Common myeloid progenitor, CD34-positive (primary cell): ENCODE measurements at regions of chr11 and their contacts with region 1.

Region 1: DNA sequence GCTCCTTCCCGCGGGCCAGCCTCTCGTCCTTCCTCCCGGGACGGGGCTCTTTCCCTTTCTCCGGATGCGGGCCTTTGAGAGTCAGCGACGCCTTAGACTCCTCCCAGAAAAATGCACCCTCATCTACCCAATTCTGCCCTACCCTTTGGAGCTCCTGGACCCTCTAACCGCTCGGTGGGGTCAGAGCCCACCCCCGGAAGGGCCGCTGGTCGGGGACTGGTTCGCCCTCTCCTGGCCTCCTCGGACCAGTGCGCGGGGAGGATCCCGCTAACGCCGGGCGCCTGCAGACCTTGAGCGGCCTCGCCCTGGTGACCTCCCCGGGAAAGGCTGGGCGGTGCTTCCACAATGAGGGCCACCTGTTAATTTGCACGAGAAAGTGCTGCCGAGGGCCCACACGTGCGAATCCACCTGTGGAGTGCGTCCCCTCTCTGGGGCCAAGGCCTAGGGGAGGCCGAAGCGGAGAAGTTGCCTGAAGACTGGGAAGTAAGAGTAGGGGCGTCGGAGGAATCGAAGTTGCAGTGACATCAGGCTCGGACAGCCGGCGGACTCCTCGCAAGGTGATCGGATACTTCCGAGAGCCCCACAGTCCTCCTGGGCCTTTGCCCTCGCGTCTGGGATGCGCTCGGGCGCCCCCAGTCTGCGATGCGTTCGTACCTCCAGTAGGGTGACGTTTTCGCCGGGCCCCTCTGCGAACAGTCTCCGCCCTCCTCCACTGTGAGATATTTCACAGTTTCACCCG is 61.5 kb downstream of the ENDOD1 start:
- DNase-seq: peak; percentile 95 to 97 (median 96)
- H3K4me3 ChIP-seq: peak overlapping the region; percentile 46 to 80 (median 64)
- H3K27ac ChIP-seq: peak overlapping the region; percentile 54 to 85
- H3K4me1 ChIP-seq: peaks cover 19 to 82% (median 62%) of the 10 kb centered on the region in 4 experiments
- H3K27me3 ChIP-seq: no peaks in the 10 kb centered on the region

Region 2: DNA sequence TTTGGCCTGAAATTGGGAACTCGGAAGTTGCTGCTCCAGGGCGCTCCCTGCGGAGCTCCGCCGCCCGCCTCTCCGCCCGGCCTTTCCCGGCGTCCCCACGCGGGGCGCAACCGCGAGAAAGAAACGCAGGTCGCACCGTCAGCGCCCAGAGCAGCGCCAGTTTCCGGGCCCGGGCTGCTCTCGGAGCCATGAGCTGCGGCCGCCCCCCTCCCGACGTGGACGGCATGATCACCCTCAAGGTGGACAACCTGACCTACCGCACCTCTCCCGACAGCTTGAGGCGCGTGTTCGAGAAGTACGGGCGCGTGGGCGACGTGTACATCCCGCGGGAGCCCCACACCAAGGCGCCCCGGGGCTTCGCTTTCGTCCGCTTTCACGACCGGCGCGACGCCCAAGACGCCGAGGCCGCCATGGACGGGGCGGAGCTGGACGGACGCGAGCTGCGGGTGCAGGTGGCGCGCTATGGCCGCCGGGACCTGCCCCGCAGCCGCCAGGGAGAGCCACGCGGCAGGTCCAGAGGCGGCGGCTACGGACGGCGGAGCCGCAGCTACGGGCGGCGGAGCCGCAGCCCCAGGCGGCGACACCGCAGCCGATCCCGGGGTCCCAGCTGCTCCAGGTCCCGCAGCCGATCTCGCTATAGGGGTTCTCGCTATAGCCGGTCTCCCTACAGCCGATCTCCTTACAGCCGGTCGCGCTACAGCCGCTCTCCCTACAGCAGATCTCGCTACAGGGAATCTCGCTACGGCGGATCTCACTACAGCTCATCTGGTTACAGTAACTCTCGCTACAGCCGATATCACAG is 83.9 kb before region 1 on chr11:
- CTCF ChIA-PET with region 1: interaction called, 275 read pairs
- POLR2A ChIA-PET with region 1: interaction called, 4 read pairs
- DNase-seq: peak; percentile 69 to 85 (median 77)
- H3K4me3 ChIP-seq: peak overlapping the region; percentile 80 to 97 (median 92)
- H3K27ac ChIP-seq: peak overlapping the region; percentile 77 to 93
- H3K4me1 ChIP-seq: peaks cover 4 to 25% (median 19%) of the 10 kb centered on the region in 4 experiments
- H3K27me3 ChIP-seq: no peaks in the 10 kb centered on the region

Region 3: GRCh38 chr11:95138448-95138847 is 12.7 kb before region 1 on chr11:
- CTCF ChIA-PET with region 1: interaction called, 28 read pairs
- POLR2A ChIA-PET with region 1: no interaction called
- DNase-seq: peak in 2 of 3 donors; percentile 36 to 46
- H3K4me3 ChIP-seq: no peak overlapping the region
- H3K27ac ChIP-seq: no peak overlapping the region
- H3K4me1 ChIP-seq: no peaks in the 10 kb centered on the region
- H3K27me3 ChIP-seq: no peaks in the 10 kb centered on the region

Region 4: GRCh38 chr11:95175818-95176368 is 24.8 kb after region 1 on chr11:
- CTCF ChIA-PET with region 1: interaction called, 12 read pairs
- POLR2A ChIA-PET with region 1: no interaction called
- DNase-seq: peak in 2 of 3 donors; percentile 36 to 40
- H3K4me3 ChIP-seq: no peak overlapping the region
- H3K27ac ChIP-seq: no peak overlapping the region
- H3K4me1 ChIP-seq: peaks cover 0 to 2% (median 0%) of the 10 kb centered on the region in 4 experiments
- H3K27me3 ChIP-seq: no peaks in the 10 kb centered on the region

Region 5: GRCh38 chr11:95268386-95268785 is 117.3 kb after region 1 on chr11:
- CTCF ChIA-PET with region 1: no interaction called
- POLR2A ChIA-PET with region 1: no interaction called
- DNase-seq: no peak
- H3K4me3 ChIP-seq: no peak overlapping the region
- H3K27ac ChIP-seq: no peak overlapping the region
- H3K4me1 ChIP-seq: peaks cover 3 to 6% (median 6%) of the 10 kb centered on the region in 4 experiments
- H3K27me3 ChIP-seq: peaks cover 0 to 13% (median 3%) of the 10 kb centered on the region in 5 experiments

Region 6: DNA sequence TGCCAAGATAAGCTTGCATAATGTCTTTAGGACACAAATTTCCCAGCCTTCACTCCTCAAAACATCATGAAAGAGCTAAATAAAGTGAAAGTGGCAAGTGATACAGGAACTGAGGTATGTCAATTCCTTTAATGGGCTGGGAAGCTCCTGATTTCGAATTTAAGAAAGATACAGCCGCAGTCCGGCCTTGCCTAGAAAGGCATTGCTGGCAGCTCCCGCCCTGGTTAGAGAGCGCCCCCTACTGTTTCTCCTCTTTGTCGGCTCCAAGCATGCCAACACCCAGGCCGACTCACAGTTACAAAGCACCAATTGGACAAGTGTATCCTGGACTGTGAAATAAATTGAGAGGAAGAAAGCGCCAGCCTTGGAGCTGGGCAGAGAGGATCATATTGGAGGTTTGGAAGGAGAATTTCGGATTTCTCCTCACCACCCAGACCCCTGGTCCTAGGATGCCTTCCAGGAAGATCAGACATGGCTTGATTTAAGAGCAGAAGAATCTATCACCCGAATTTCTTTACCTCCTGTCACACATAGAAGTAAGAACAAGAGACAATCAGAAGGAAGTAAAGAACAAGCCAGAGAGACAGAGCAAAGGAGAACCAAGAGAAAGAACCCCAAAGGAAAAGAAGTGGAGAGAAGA is 554.5 kb after region 1 on chr11:
- CTCF ChIA-PET with region 1: interaction called, 234 read pairs
- POLR2A ChIA-PET with region 1: interaction called, 3 read pairs
- DNase-seq: peak; percentile 88 to 92 (median 90)
- H3K4me3 ChIP-seq: peak overlapping the region in 3 of 7 experiments; percentile 20 to 26 (median 25)
- H3K27ac ChIP-seq: no peak overlapping the region
- H3K4me1 ChIP-seq: peaks cover 5 to 44% (median 20%) of the 10 kb centered on the region in 4 experiments
- H3K27me3 ChIP-seq: no peaks in the 10 kb centered on the region

Region 7: GRCh38 chr11:95764267-95764898 is 613.3 kb after region 1 on chr11:
- CTCF ChIA-PET with region 1: interaction called, 277 read pairs
- POLR2A ChIA-PET with region 1: no interaction called
- DNase-seq: peak; percentile 65 to 87 (median 84)
- H3K4me3 ChIP-seq: no peak overlapping the region
- H3K27ac ChIP-seq: no peak overlapping the region
- H3K4me1 ChIP-seq: peaks cover 4 to 17% (median 11%) of the 10 kb centered on the region in 4 experiments
- H3K27me3 ChIP-seq: no peaks in the 10 kb centered on the region